ENCODE measurements at regions of chr15 and their contacts with region 1.

Region 1: GRCh38 chr15:91426412-91426811 is 326.4 kb downstream of the SV2B start:
- DNase-seq: peak in 2 of 5 donors; percentile 17 to 62
- H3K4me3 ChIP-seq: no peak overlapping the region
- H3K4me3 Mint-ChIP-seq: peak overlapping the region in 3 of 8 donors; percentile 8 to 36 (median 30)
- H3K27ac ChIP-seq: no peak overlapping the region
- H3K27ac Mint-ChIP-seq: peak overlapping the region in 3 of 7 donors; percentile 25 to 66 (median 54)
- H3K4me1 ChIP-seq: peaks cover 52% of the 10 kb centered on the region
- H3K4me1 Mint-ChIP-seq: peaks cover 24 to 84% (median 28%) of the 10 kb centered on the region in 4 donors
- H3K27me3 ChIP-seq: no peaks in the 10 kb centered on the region
- H3K27me3 Mint-ChIP-seq: no peaks in the 10 kb centered on the region

Region 2: DNA sequence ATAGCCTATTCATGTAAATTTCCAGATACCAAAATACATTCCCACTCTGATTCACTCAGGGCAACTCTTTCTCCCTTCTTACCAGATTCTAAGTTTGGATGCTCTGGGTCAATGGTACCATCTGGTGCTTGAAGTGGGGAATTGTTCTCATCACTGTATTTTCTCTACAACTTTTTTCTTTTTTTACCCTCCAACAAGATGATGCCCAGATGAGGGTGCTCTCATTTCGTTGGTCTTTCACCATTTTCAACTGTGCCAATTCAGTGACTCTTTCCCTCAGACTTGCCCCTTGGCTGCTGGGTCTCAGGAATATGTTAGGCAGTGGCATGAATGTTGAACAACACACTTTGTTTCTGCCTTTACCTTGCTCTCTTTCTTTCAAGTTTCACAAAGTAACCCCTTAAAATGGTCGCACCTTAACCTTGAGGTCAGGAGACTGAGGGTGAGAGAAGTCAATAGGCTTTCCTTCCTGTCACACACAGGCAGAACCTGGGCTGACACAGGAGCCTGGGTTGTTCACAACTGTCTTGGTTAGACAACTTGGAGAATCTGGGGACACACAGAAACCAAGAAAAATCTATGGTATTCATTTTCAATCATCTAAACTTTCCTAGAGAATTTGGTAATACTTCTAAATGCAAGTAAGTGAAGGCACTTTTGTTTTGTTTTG is 96.4 kb after region 1 on chr15:
- CTCF ChIA-PET with region 1: no interaction called
- POLR2A ChIA-PET with region 1: no interaction called
- intact Hi-C with region 1: loop called (anchors 5 kb)
- DNase-seq: peak in 4 of 5 donors; percentile 37 to 52 (median 40)
- H3K4me3 ChIP-seq: no peak overlapping the region
- H3K4me3 Mint-ChIP-seq: peak overlapping the region in 3 of 8 donors; percentile 7 to 29 (median 12)
- H3K27ac ChIP-seq: no peak overlapping the region
- H3K27ac Mint-ChIP-seq: peak overlapping the region in 4 of 7 donors; percentile 23 to 68 (median 36)
- H3K4me1 ChIP-seq: peaks cover 25% of the 10 kb centered on the region
- H3K4me1 Mint-ChIP-seq: peaks cover 19 to 37% (median 24%) of the 10 kb centered on the region in 4 donors
- H3K27me3 ChIP-seq: no peaks in the 10 kb centered on the region
- H3K27me3 Mint-ChIP-seq: peaks cover 1 to 6% of the 10 kb centered on the region in 2 donors

Measured in CD4-positive, alpha-beta memory T cell (primary cell).